ENCODE measurements at regions of chr15 and their contacts with region 1.

Region 1: DNA sequence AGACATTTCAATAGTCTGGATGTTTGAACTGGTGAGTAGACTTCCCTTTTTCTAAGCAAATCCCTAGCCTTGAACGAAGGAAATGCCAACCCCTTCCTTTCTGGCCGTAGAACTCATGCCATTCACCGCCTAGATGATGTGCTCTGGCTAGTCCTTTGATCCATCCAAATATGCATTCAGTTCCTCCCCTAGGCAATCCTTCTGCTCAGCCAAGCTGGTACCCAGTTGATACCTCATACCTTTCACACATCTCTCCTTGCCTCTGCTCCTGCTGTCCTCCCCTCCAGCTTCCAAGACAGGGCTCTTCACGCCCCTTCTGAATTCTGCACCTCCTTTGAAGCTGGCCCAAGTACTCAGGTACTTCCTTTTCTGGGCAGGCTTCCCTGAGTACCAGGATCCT is 40.5 kb upstream of the ATOSA start:
- DNase-seq: no peak
- ATAC-seq: no peak
- H3K4me3 ChIP-seq: no peak overlapping the region
- H3K27ac ChIP-seq: no peak overlapping the region
- H3K4me1 ChIP-seq: no peaks in the 10 kb centered on the region
- H3K27me3 ChIP-seq: no peaks in the 10 kb centered on the region
- CTCF ChIP-seq: no peak

Region 2: GRCh38 chr15:52385670-52386069 is 334.0 kb before region 1 on chr15:
- CTCF ChIA-PET with region 1: no interaction called
- POLR2A ChIA-PET with region 1: interaction called, 11 read pairs
- in situ Hi-C with region 1: no loop called
- intact Hi-C with region 1: no loop called
- DNase-seq: no peak
- ATAC-seq: no peak
- H3K4me3 ChIP-seq: no peak overlapping the region
- H3K27ac ChIP-seq: no peak overlapping the region
- H3K4me1 ChIP-seq: no peaks in the 10 kb centered on the region
- H3K27me3 ChIP-seq: no peaks in the 10 kb centered on the region
- CTCF ChIP-seq: no peak

Region 3: GRCh38 chr15:52626671-52627369 is 92.9 kb before region 1 on chr15:
- CTCF ChIA-PET with region 1: no interaction called
- POLR2A ChIA-PET with region 1: no interaction called
- in situ Hi-C with region 1: no loop called
- intact Hi-C with region 1: no loop called
- DNase-seq: no peak
- ATAC-seq: no peak
- H3K4me3 ChIP-seq: no peak overlapping the region
- H3K27ac ChIP-seq: no peak overlapping the region
- H3K4me1 ChIP-seq: no peaks in the 10 kb centered on the region
- H3K27me3 ChIP-seq: no peaks in the 10 kb centered on the region
- CTCF ChIP-seq: no peak

Measured in Panc1 (cell line).